ENCODE measurements at regions of chr5 and their contacts with region 1.

Region 1: GRCh38 chr5:133051580-133052332 is at the start of gene HSPA4:
- DNase-seq: peak; percentile 95
- ATAC-seq: peak; percentile 91
- H3K4me3 ChIP-seq: peak within 1 kb of the TSS; percentile 94
- H3K27ac ChIP-seq: peak within 1 kb of the TSS; percentile 99
- H3K4me1 ChIP-seq: no peaks in the 10 kb centered on the region; the same call in 1 of the 2 replicates
- H3K27me3 ChIP-seq: no peaks in the 10 kb centered on the region
- CTCF ChIP-seq: no peak
- EP300 ChIP-seq: peak in 1 of 2 experiments; percentile 39; a peak in 1 of 4 replicates
- POLR2A ChIP-seq: peak; percentile 92
- RAD21 ChIP-seq: no peak
- polyA plus RNA-seq, gene HSPA4: 69.5 to 123 TPM

Region 2: GRCh38 chr5:132746954-132747615 is 304.7 kb before region 1 on chr5 and contains the start of gene CCNI2:
- CTCF ChIA-PET with region 1: no interaction called
- POLR2A ChIA-PET with region 1: no interaction called
- RAD21 ChIA-PET with region 1: no interaction called
- SMC1A ChIA-PET with region 1: no interaction called
- in situ Hi-C with region 1: no loop called
- intact Hi-C with region 1: no loop called
- DNase-seq: no peak
- ATAC-seq: peak; percentile 71
- H3K4me3 ChIP-seq: peak within 1 kb of the TSS; percentile 72
- H3K27ac ChIP-seq: no peak within 1 kb of the TSS
- H3K4me1 ChIP-seq: peaks cover 23% of the 10 kb centered on the region
- H3K27me3 ChIP-seq: no peaks in the 10 kb centered on the region
- CTCF ChIP-seq: peak; percentile 47 to 56 (median 53)
- EP300 ChIP-seq: no peak
- POLR2A ChIP-seq: peak; percentile 67
- RAD21 ChIP-seq: peak; percentile 20; the same call in 1 of the 2 replicates
- polyA plus RNA-seq, gene CCNI2: 3.1 to 8.0 TPM

Region 3: GRCh38 chr5:132963175-132964104 is 88.3 kb before region 1 on chr5 and contains the start of gene AFF4:
- CTCF ChIA-PET with region 1: no interaction called
- POLR2A ChIA-PET with region 1: interaction called, 16 read pairs
- RAD21 ChIA-PET with region 1: interaction called, 5 read pairs
- SMC1A ChIA-PET with region 1: interaction called, 9 read pairs
- in situ Hi-C with region 1: no loop called
- intact Hi-C with region 1: loop called (anchors 5 kb)
- DNase-seq: peak; percentile 68
- ATAC-seq: peak; percentile 97
- H3K4me3 ChIP-seq: peak within 1 kb of the TSS; percentile 67
- H3K27ac ChIP-seq: peak within 1 kb of the TSS; percentile 69
- H3K4me1 ChIP-seq: 0 out of 2 replicates have a peak, but pooled peaks cover 2% of the 10 kb centered on the region
- H3K27me3 ChIP-seq: no peaks in the 10 kb centered on the region
- CTCF ChIP-seq: no peak
- EP300 ChIP-seq: no peak
- POLR2A ChIP-seq: peak; percentile 98
- RAD21 ChIP-seq: no peak
- polyA plus RNA-seq, gene AFF4: 1.1 to 1.8 TPM

Region 4: GRCh38 chr5:133025804-133026663 is 25.7 kb before region 1 on chr5 and contains the start of gene ZCCHC10:
- CTCF ChIA-PET with region 1: interaction called, 3 read pairs
- POLR2A ChIA-PET with region 1: interaction called, 5 read pairs
- RAD21 ChIA-PET with region 1: no interaction called
- SMC1A ChIA-PET with region 1: interaction called, 7 read pairs
- in situ Hi-C with region 1: no loop called
- intact Hi-C with region 1: loop called (anchors 2 kb)
- DNase-seq: peak; percentile 56
- ATAC-seq: peak; percentile 98
- H3K4me3 ChIP-seq: peak within 1 kb of the TSS; percentile 99
- H3K27ac ChIP-seq: peak within 1 kb of the TSS; percentile 73
- H3K4me1 ChIP-seq: 0 out of 2 replicates have a peak, but pooled peaks cover 5% of the 10 kb centered on the region
- H3K27me3 ChIP-seq: no peaks in the 10 kb centered on the region
- CTCF ChIP-seq: no peak
- EP300 ChIP-seq: no peak
- POLR2A ChIP-seq: peak; percentile 93
- RAD21 ChIP-seq: no peak
- polyA plus RNA-seq, gene ZCCHC10: 114 to 117 TPM

Region 5: GRCh38 chr5:133032852-133033742 is 18.7 kb before region 1 on chr5:
- CTCF ChIA-PET with region 1: interaction called, 4 read pairs
- POLR2A ChIA-PET with region 1: interaction called, 21 read pairs
- RAD21 ChIA-PET with region 1: no interaction called
- SMC1A ChIA-PET with region 1: interaction called, 5 read pairs
- in situ Hi-C with region 1: no loop called
- intact Hi-C with region 1: no loop called
- DNase-seq: no peak
- ATAC-seq: peak; percentile 87
- H3K4me3 ChIP-seq: no peak overlapping the region
- H3K27ac ChIP-seq: no peak overlapping the region
- H3K4me1 ChIP-seq: peaks cover 11% of the 10 kb centered on the region
- H3K27me3 ChIP-seq: no peaks in the 10 kb centered on the region
- CTCF ChIP-seq: no peak
- EP300 ChIP-seq: no peak
- POLR2A ChIP-seq: no peak
- RAD21 ChIP-seq: no peak

Region 6: GRCh38 chr5:133123297-133123696 is 71.5 kb after region 1 on chr5:
- CTCF ChIA-PET with region 1: no interaction called
- POLR2A ChIA-PET with region 1: no interaction called
- RAD21 ChIA-PET with region 1: no interaction called
- SMC1A ChIA-PET with region 1: no interaction called
- in situ Hi-C with region 1: no loop called
- intact Hi-C with region 1: no loop called
- DNase-seq: no peak
- ATAC-seq: peak; percentile 66
- H3K4me3 ChIP-seq: no peak overlapping the region
- H3K27ac ChIP-seq: no peak overlapping the region
- H3K4me1 ChIP-seq: no peaks in the 10 kb centered on the region; the same call in 1 of the 2 replicates
- H3K27me3 ChIP-seq: no peaks in the 10 kb centered on the region; a peak in 1 of 4 replicates
- CTCF ChIP-seq: no peak
- EP300 ChIP-seq: no peak
- POLR2A ChIP-seq: no peak
- RAD21 ChIP-seq: no peak

Measured in GM12878 (cell line).